GM12878 (cell line): ENCODE measurements at regions of chr10 and their contacts with region 1.

Region 1: DNA sequence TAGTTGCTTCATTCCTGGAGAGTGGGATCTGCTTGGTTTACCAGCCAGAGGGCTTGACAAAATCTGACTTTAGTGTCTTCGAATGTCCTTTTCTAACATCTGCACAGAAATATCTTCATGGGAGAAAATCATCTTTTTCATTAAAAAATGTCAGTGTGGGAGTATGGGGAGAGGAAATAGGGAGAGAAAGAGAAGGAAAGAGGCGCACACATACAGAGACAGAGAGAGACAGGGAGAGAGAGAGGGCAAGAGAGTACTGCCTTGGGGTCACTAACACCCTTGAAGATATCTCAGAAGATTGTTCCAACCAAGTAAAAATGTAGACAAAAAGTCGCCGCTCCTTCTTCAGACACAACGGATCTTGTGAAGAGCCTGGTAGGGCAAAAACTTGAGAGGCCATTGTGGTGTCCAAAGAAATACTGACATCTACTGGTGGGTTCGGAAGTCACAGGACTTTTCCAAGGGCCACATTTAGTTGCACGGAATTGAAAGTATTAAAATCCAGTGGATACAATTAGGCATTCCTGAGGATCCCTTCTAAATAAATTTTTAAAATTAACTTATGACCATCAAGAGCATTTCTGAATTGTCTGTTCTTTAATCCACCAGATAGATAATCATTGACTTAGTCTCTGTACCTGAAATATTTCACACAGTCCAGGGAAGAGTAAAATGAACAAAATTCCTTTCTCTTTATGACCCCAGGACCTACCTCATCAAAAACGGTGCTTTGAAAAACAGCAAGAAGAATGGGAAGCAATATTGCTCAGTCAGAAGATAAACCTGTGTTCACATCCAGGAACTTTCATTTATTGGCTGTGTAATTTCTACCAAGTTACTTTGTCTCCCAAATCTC is 29.7 kb downstream of the VIM start:
- DNase-seq: peak; percentile 16
- ATAC-seq: peak; percentile 85
- H3K4me3 ChIP-seq: no peak overlapping the region
- H3K27ac ChIP-seq: no peak overlapping the region
- H3K4me1 ChIP-seq: no peaks in the 10 kb centered on the region
- H3K27me3 ChIP-seq: no peaks in the 10 kb centered on the region
- CTCF ChIP-seq: peak; percentile 68 to 92 (median 71); a peak in 5 of 6 replicates
- EP300 ChIP-seq: no peak
- POLR2A ChIP-seq: no peak
- RAD21 ChIP-seq: peak; percentile 95

Region 2: GRCh38 chr10:15879058-15879457 is 1378.6 kb before region 1 on chr10:
- CTCF ChIA-PET with region 1: no interaction called
- POLR2A ChIA-PET with region 1: no interaction called
- RAD21 ChIA-PET with region 1: no interaction called
- SMC1A ChIA-PET with region 1: no interaction called
- in situ Hi-C with region 1: loop called (anchors 25 kb)
- intact Hi-C with region 1: no loop called
- DNase-seq: no peak
- ATAC-seq: peak; percentile 38; the same call in 1 of the 3 replicates
- H3K4me3 ChIP-seq: no peak overlapping the region
- H3K27ac ChIP-seq: no peak overlapping the region
- H3K4me1 ChIP-seq: no peaks in the 10 kb centered on the region
- H3K27me3 ChIP-seq: no peaks in the 10 kb centered on the region
- CTCF ChIP-seq: peak; percentile 27 to 70 (median 41); a peak in 5 of 6 replicates
- EP300 ChIP-seq: no peak
- POLR2A ChIP-seq: no peak
- RAD21 ChIP-seq: peak; percentile 67

Region 3: GRCh38 chr10:16828114-16828568 is 429.6 kb before region 1 on chr10:
- CTCF ChIA-PET with region 1: interaction called, 15 read pairs
- POLR2A ChIA-PET with region 1: no interaction called
- RAD21 ChIA-PET with region 1: interaction called, 3 read pairs
- SMC1A ChIA-PET with region 1: interaction called, 6 read pairs
- in situ Hi-C with region 1: no loop called
- intact Hi-C with region 1: loop called (anchors 1 kb)
- DNase-seq: peak; percentile 48
- ATAC-seq: peak; percentile 90
- H3K4me3 ChIP-seq: no peak overlapping the region
- H3K27ac ChIP-seq: no peak overlapping the region
- H3K4me1 ChIP-seq: no peaks in the 10 kb centered on the region
- H3K27me3 ChIP-seq: no peaks in the 10 kb centered on the region
- CTCF ChIP-seq: peak; percentile 50 to 60 (median 51); a peak in 5 of 6 replicates
- EP300 ChIP-seq: no peak
- POLR2A ChIP-seq: no peak
- RAD21 ChIP-seq: peak; percentile 67

Region 4: DNA sequence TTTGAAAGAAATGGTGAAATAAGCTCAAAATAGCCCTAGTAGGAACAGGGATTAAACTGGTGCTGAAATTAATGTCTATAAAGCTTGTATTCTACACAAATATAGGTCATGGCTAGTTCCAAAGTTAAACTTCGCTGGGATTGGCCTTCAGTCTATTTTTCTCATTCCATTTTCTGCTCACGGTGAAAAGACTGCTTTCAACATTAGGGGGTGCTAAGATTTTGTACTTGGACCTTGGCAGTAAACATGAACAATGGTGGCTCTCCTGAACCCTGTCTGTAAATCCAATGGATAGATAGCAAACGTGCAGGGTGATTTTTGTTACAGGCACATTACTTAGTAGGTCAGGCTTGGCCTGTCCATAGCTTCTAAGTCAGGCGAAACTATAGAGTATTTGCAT is 404.5 kb before region 1 on chr10:
- CTCF ChIA-PET with region 1: interaction called, 11 read pairs
- POLR2A ChIA-PET with region 1: no interaction called
- RAD21 ChIA-PET with region 1: interaction called, 5 read pairs
- SMC1A ChIA-PET with region 1: interaction called, 7 read pairs
- in situ Hi-C with region 1: loop called (anchors 5 kb)
- intact Hi-C with region 1: no loop called
- DNase-seq: no peak
- ATAC-seq: peak; percentile 26; the same call in 2 of the 3 replicates
- H3K4me3 ChIP-seq: no peak overlapping the region
- H3K27ac ChIP-seq: no peak overlapping the region
- H3K4me1 ChIP-seq: no peaks in the 10 kb centered on the region
- H3K27me3 ChIP-seq: no peaks in the 10 kb centered on the region; a peak in 1 of 4 replicates
- CTCF ChIP-seq: peak in 2 of 3 experiments; percentile 24 to 40; a peak in 2 of 6 replicates
- EP300 ChIP-seq: no peak
- POLR2A ChIP-seq: no peak
- RAD21 ChIP-seq: peak; percentile 45; the same call in 1 of the 2 replicates

Region 5: DNA sequence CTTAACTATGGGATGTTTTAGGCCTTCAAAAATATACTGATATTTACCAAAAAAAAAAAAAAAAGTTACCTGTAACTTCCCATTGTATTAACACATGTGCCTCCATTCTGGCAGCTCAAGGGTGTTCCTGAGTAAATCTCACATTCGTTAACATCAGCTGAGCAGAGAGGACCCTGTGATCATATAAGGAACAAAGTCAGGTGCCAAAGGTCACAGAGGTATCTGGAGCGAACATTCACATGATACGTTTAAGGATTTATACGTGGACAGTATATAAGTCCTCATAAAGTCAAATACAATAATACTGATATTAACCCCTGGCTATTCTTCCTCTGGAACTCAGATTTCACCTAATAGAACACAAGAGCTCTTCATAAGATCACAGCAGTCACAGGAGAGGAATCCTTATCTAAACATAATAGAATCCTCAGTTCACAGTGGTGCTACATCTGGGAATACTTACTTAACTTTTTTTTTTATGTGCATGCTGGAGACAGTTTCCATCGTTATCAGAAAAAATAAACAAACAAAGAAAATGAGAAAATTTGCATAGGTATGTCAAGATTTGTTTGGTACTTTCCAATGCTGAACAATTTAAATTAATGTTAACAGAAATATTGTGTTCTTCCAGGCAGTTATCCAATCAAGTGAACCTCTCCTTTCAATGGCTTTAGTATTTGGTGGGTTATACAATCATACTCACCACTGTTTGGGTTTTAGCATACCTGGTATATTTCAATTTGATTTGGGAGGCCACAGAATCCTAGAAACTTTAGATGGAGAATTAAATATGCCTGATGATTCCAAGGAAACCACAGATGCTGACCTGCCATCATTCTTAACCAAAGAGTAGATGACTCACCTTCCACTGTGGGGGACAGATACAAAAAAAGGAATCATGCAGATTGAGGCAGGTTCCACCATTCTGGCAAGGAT is 134.7 kb before region 1 on chr10:
- CTCF ChIA-PET with region 1: no interaction called
- POLR2A ChIA-PET with region 1: no interaction called
- RAD21 ChIA-PET with region 1: no interaction called
- SMC1A ChIA-PET with region 1: no interaction called
- in situ Hi-C with region 1: no loop called
- intact Hi-C with region 1: loop called (anchors 10 kb)
- DNase-seq: no peak
- ATAC-seq: no peak
- H3K4me3 ChIP-seq: no peak overlapping the region
- H3K27ac ChIP-seq: no peak overlapping the region
- H3K4me1 ChIP-seq: no peaks in the 10 kb centered on the region
- H3K27me3 ChIP-seq: no peaks in the 10 kb centered on the region
- CTCF ChIP-seq: no peak
- EP300 ChIP-seq: no peak
- POLR2A ChIP-seq: no peak
- RAD21 ChIP-seq: no peak

Region 6: DNA sequence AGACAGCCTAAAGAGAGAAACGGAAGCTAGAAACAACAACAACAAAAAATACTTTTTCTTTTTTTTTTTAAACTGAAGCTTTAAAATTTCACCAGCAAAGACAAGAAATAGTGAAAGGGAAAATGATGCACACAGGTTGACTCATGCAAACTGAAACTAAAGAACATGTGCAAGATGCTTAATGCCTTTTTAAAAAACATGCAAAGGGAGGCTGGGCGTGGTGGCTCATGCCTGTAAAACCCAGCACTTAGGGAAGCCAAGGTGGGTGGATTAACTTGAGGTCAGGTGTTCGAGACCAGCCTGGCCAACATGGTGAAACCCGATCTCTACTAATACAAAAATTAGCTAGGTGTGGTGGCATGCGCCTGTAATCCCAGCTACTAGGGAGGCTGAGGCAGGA is 112.9 kb before region 1 on chr10:
- CTCF ChIA-PET with region 1: no interaction called
- POLR2A ChIA-PET with region 1: no interaction called
- RAD21 ChIA-PET with region 1: no interaction called
- SMC1A ChIA-PET with region 1: no interaction called
- in situ Hi-C with region 1: no loop called
- intact Hi-C with region 1: no loop called
- DNase-seq: peak; percentile 9
- ATAC-seq: peak; percentile 43; the same call in 2 of the 3 replicates
- H3K4me3 ChIP-seq: no peak overlapping the region
- H3K27ac ChIP-seq: no peak overlapping the region
- H3K4me1 ChIP-seq: no peaks in the 10 kb centered on the region
- H3K27me3 ChIP-seq: no peaks in the 10 kb centered on the region
- CTCF ChIP-seq: no peak
- EP300 ChIP-seq: no peak
- POLR2A ChIP-seq: no peak
- RAD21 ChIP-seq: no peak